ENCODE measurements at regions of chr16 and their contacts with region 1.

Region 1: GRCh38 chr16:29700253-29700987 is 21.4 kb downstream of the QPRT start:
- DNase-seq: peak; percentile 82
- ATAC-seq: peak; percentile 76

Region 2: GRCh38 chr16:30018731-30019158 is 318.3 kb after region 1 on chr16:
- intact Hi-C with region 1: loop called (anchors 2 kb)
- DNase-seq: no peak
- ATAC-seq: no peak